SK-N-SH (cell line): ENCODE measurements at regions of chr12 and their contacts with region 1.

Region 1: GRCh38 chr12:119780786-119781434 is 96.2 kb downstream of the CIT start:
- DNase-seq: peak; percentile 59
- H3K4me3 ChIP-seq: peak overlapping the region in 1 of 2 experiments; percentile 17; a peak in 1 of 4 replicates
- H3K27ac ChIP-seq: no peak overlapping the region
- H3K4me1 ChIP-seq: no peaks in the 10 kb centered on the region
- H3K27me3 ChIP-seq: no peaks in the 10 kb centered on the region
- CTCF ChIP-seq: peak; percentile 93
- EP300 ChIP-seq: no peak
- RAD21 ChIP-seq: peak; percentile 64

Region 2: DNA sequence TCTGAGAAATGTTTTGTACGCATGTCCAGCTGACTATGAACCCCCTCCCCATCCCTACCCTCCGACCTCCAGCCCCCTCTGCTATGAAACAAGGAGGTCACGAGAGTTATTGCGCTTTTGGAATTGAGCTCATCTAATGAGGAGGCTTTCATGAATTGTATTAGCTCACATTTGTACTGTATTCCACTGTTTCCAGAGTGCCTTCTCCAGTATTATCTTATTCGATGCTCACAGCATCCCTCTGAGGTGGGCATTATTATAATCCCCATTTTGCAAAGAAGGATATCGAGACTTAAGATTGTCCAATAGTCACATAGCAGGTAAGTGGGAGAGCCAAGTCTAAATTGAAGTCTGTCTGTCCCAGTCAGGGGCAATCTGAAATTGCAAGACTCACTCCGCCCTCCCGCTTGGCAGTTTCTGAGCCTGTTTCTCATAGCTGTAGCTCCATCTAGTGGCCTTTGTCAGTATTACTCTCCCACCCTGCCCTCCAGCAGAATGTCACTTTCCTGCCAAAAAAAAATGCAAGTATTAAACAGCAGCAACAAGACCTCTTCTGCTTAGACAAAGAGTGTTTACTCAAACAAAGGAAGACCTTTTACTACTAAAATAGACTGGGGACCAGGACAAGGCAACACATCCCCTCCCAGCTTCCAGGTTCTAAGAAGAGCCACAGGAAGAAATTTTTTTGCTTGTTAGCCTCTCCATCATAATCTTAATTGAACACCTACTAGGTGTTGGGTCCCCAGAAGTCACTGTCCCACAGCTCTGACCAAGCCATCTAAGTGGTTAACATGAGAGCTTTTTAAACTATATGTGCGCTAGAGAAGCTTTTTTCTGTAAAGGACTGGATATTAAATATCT is 235.9 kb before region 1 on chr12:
- CTCF ChIA-PET with region 1: no interaction called
- POLR2A ChIA-PET with region 1: no interaction called
- DNase-seq: peak; percentile 75
- H3K4me3 ChIP-seq: 0 out of 4 replicates have a peak overlapping the region, but pooled peaks of 1 of the 2 experiments have one; percentile 1
- H3K27ac ChIP-seq: no peak overlapping the region
- H3K4me1 ChIP-seq: no peaks in the 10 kb centered on the region
- H3K27me3 ChIP-seq: no peaks in the 10 kb centered on the region
- CTCF ChIP-seq: peak; percentile 86
- EP300 ChIP-seq: no peak
- RAD21 ChIP-seq: peak; percentile 94

Region 3: GRCh38 chr12:119659289-119659897 is 121.5 kb before region 1 on chr12:
- CTCF ChIA-PET with region 1: interaction called, 12 read pairs
- POLR2A ChIA-PET with region 1: no interaction called
- DNase-seq: peak; percentile 69
- H3K4me3 ChIP-seq: no peak overlapping the region; a peak in 1 of 4 replicates
- H3K27ac ChIP-seq: no peak overlapping the region
- H3K4me1 ChIP-seq: no peaks in the 10 kb centered on the region
- H3K27me3 ChIP-seq: no peaks in the 10 kb centered on the region
- CTCF ChIP-seq: peak; percentile 93
- EP300 ChIP-seq: no peak
- RAD21 ChIP-seq: peak; percentile 55

Region 4: GRCh38 chr12:119695034-119695433 is 85.9 kb before region 1 on chr12:
- CTCF ChIA-PET with region 1: interaction called, 23 read pairs
- POLR2A ChIA-PET with region 1: no interaction called
- DNase-seq: peak; percentile 37
- H3K4me3 ChIP-seq: no peak overlapping the region
- H3K27ac ChIP-seq: no peak overlapping the region
- H3K4me1 ChIP-seq: peaks cover 18 to 20% of the 10 kb centered on the region in 2 experiments
- H3K27me3 ChIP-seq: no peaks in the 10 kb centered on the region
- CTCF ChIP-seq: peak; percentile 59
- EP300 ChIP-seq: no peak
- RAD21 ChIP-seq: 0 out of 2 replicates have a peak, but pooled peaks have one; percentile 22

Region 5: GRCh38 chr12:119797090-119797489 is 16.2 kb after region 1 on chr12:
- CTCF ChIA-PET with region 1: interaction called, 70 read pairs
- POLR2A ChIA-PET with region 1: no interaction called
- DNase-seq: no peak
- H3K4me3 ChIP-seq: no peak overlapping the region
- H3K27ac ChIP-seq: no peak overlapping the region
- H3K4me1 ChIP-seq: no peaks in the 10 kb centered on the region
- H3K27me3 ChIP-seq: no peaks in the 10 kb centered on the region
- CTCF ChIP-seq: no peak
- EP300 ChIP-seq: no peak
- RAD21 ChIP-seq: no peak

Region 6: GRCh38 chr12:119828300-119828699 is 47.4 kb after region 1 on chr12:
- CTCF ChIA-PET with region 1: interaction called, 15 read pairs
- POLR2A ChIA-PET with region 1: no interaction called
- DNase-seq: no peak
- H3K4me3 ChIP-seq: no peak overlapping the region
- H3K27ac ChIP-seq: no peak overlapping the region
- H3K4me1 ChIP-seq: no peaks in the 10 kb centered on the region
- H3K27me3 ChIP-seq: no peaks in the 10 kb centered on the region
- CTCF ChIP-seq: no peak
- EP300 ChIP-seq: no peak
- RAD21 ChIP-seq: no peak